ENCODE measurements at regions of chr5 and their contacts with region 1.

Region 1: GRCh38 chr5:42807722-42808447 is 3.8 kb downstream of the SELENOP start:
- DNase-seq: no peak
- ATAC-seq: peak; percentile 53

Region 2: GRCh38 chr5:42745426-42745825 is 62.5 kb before region 1 on chr5:
- intact Hi-C with region 1: no loop called
- DNase-seq: no peak
- ATAC-seq: no peak

Region 3: GRCh38 chr5:42889311-42889933 is 81.5 kb after region 1 on chr5:
- intact Hi-C with region 1: loop called (anchors 5 kb)
- DNase-seq: peak; percentile 65
- ATAC-seq: peak; percentile 96

Region 4: GRCh38 chr5:43019614-43020293 is 211.9 kb after region 1 on chr5:
- intact Hi-C with region 1: no loop called
- DNase-seq: peak; percentile 62
- ATAC-seq: peak; percentile 50